ENCODE measurements at regions of chr1 and their contacts with region 1.

Region 1: DNA sequence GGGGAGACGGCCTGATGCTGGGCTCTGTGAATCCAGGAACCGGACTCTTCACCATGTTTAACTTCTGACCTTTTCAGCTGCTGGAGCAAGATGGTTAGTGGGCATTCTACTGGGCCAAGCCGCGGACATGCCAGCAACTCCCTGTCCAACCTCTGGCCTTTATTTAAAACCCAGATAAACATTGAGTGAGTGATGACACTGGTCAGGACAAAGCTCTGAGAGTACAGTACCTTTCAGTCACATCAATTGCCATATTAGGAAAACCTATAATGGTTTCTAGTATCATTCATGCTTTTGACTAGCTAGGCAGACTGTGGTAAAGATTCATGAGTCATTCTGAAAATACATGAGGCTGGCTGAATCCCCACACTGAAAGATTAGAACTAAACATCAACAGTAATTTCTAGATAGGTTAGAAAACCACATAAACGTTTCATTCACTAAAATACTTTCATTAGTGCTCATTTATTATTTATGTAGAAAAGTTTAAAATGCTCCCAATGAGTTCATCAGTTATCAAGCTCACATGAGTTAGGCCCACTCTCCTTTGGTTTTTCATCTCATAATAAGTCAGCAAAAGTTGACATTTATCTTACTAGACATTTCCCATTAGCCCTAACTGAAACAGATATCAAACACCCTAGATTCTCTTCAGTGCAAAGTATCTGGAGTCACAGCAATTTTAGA is 7.1 kb upstream of the ACTA1 start:
- DNase-seq: peak; percentile 17
- H3K4me3 Mint-ChIP-seq: peak overlapping the region; percentile 57
- H3K27ac Mint-ChIP-seq: peak overlapping the region; percentile 76
- H3K4me1 Mint-ChIP-seq: peaks cover 22% of the 10 kb centered on the region
- H3K27me3 Mint-ChIP-seq: peaks cover 36% of the 10 kb centered on the region

Region 2: DNA sequence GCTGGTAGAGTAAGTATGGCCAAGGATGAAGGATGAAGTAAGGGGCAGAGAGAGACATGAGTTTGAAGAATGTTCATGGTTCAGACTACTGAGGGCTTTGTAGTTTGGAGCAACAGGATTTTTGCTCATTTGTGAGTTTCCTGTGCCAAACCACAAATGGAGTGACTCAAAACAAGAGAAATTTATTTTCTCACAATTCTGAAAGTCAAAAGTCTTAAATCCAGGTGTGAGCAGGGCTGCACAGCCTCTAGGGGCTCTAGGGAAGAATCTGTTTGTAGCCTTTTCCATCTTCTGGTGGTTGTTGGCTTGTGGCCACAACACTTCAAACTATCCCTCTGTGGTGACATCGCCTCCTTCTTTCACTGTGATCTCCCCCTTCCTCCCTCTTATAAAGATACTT is 646.8 kb before region 1 on chr1:
- intact Hi-C with region 1: loop called (anchors 1 kb)
- DNase-seq: peak; percentile 49
- H3K4me3 Mint-ChIP-seq: no peak overlapping the region
- H3K27ac Mint-ChIP-seq: no peak overlapping the region
- H3K4me1 Mint-ChIP-seq: peaks cover 27% of the 10 kb centered on the region
- H3K27me3 Mint-ChIP-seq: no peaks in the 10 kb centered on the region

Region 3: DNA sequence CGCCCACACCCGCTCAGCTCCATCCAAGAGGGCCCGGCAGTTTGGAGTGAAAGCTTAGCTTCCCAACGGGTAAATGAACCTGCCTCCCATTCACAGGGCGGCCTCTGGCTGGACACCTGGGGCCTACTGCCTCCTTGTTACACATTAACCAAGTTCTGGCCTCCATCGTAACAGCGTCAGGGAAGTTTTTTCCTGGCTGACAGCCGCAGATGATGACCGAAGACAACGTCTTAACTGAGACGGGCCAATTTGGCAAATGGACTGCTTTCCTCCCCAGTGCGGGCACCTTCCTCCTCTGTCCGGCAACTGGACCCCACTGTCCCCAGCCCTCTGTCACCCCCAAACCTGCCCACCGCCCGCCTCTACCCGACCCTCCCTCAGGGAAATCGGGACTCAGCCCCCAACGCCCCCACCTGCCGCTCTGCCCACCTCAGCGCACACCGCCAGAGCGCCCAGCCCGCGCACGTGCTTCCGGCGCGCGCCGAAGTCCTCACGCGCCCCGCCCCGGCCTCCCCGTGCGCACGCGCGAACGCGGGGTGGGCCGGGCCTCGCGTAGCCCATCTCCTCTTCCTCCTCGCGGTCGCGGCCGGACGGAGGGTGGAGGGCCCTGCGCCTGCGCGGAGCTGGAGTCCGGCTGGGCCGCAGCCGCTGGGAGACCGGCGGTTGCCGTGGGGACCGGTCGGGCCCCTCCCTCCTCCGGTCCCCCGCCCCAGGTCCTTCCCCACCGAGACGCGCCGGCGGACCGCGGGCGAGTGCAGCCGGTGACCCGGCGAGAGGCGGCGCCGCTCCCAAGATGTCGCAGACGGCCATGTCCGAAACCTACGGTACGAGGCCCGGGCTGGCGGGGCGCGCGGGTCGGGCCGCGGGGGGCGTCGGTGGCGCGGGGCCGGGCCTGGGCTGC is 170.2 kb before region 1 on chr1 and contains the start of gene RAB4A:
- intact Hi-C with region 1: loop called (anchors 1 kb)
- DNase-seq: peak; percentile 78
- H3K4me3 Mint-ChIP-seq: peak within 1 kb of the TSS; percentile 91
- H3K27ac Mint-ChIP-seq: peak within 1 kb of the TSS; percentile 82
- H3K4me1 Mint-ChIP-seq: peaks cover 19% of the 10 kb centered on the region
- H3K27me3 Mint-ChIP-seq: peaks cover 2% of the 10 kb centered on the region
- total RNA-seq, gene RAB4A: 29.0 and 29.3 TPM in 2 replicates

Region 4: GRCh38 chr1:229341774-229342655 is 99.0 kb before region 1 on chr1:
- intact Hi-C with region 1: loop called (anchors 1 kb)
- DNase-seq: peak; percentile 82
- H3K4me3 Mint-ChIP-seq: peak overlapping the region; percentile 89
- H3K27ac Mint-ChIP-seq: peak overlapping the region; percentile 87
- H3K4me1 Mint-ChIP-seq: peaks cover 50% of the 10 kb centered on the region
- H3K27me3 Mint-ChIP-seq: peaks cover 21% of the 10 kb centered on the region

Region 5: GRCh38 chr1:229507951-229508822 is 67.2 kb after region 1 on chr1 and contains the start of gene NUP133:
- intact Hi-C with region 1: loop called (anchors 1 kb)
- DNase-seq: peak; percentile 97
- H3K4me3 Mint-ChIP-seq: peak within 1 kb of the TSS; percentile 96
- H3K27ac Mint-ChIP-seq: peak within 1 kb of the TSS; percentile 97
- H3K4me1 Mint-ChIP-seq: peaks cover 25% of the 10 kb centered on the region
- H3K27me3 Mint-ChIP-seq: peaks cover 4% of the 10 kb centered on the region
- total RNA-seq, gene NUP133: 47.9 and 49.1 TPM in 2 replicates

Region 6: GRCh38 chr1:229558571-229559335 is 117.8 kb after region 1 on chr1 and contains the start of gene ABCB10:
- intact Hi-C with region 1: loop called (anchors 1 kb)
- DNase-seq: peak; percentile 81
- H3K4me3 Mint-ChIP-seq: peak within 1 kb of the TSS; percentile 90
- H3K27ac Mint-ChIP-seq: peak within 1 kb of the TSS; percentile 83
- H3K4me1 Mint-ChIP-seq: peaks cover 49% of the 10 kb centered on the region
- H3K27me3 Mint-ChIP-seq: no peaks in the 10 kb centered on the region
- total RNA-seq, gene ABCB10: 46.2 and 47.0 TPM in 2 replicates

Region 7: DNA sequence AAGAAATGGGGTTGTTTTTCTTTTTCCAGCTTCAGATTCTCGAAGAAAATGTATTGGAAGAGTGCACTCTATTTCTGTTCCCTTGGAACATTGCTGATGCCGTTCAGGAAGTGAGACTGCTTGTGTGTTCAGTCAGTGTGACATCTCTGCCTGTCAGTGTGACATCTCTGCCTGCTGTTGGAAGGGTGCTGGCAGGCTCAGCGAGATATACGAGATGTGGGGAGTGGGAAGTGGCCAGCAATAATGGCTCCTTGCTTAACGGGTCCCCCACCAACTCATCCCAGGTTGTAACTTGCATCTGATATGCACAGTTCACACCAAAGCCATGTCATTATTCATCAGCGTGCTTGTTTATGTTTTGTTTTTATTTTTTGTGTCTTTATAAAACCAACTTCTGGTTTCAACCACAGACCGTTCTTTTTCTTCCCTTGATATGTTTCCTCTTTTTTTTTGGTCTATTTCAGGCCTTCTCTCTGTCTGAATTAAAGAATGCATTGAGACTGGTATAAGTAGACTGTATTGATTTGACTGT is 771.5 kb after region 1 on chr1:
- intact Hi-C with region 1: loop called (anchors 1 kb)
- DNase-seq: no peak
- H3K4me3 Mint-ChIP-seq: peak overlapping the region; percentile 34
- H3K27ac Mint-ChIP-seq: peak overlapping the region; percentile 91
- H3K4me1 Mint-ChIP-seq: peaks cover 65% of the 10 kb centered on the region
- H3K27me3 Mint-ChIP-seq: no peaks in the 10 kb centered on the region

Measured in activated T-helper 1 cell treated with anti-CD3 and anti-CD28 coated beads, Interleukin-12 subunit alpha, Interleukin-12 subunit beta, Interleukin-2, Interleukin-4 antibody, amounts not matched to agents 30 ng/mL and 10 ng/mL and 1 ng/mL, durations not matched to agents 14 hours and 24 hours and 36 hours (primary cell).